ENCODE measurements at regions of chr10 and their contacts with region 1.

Region 1: DNA sequence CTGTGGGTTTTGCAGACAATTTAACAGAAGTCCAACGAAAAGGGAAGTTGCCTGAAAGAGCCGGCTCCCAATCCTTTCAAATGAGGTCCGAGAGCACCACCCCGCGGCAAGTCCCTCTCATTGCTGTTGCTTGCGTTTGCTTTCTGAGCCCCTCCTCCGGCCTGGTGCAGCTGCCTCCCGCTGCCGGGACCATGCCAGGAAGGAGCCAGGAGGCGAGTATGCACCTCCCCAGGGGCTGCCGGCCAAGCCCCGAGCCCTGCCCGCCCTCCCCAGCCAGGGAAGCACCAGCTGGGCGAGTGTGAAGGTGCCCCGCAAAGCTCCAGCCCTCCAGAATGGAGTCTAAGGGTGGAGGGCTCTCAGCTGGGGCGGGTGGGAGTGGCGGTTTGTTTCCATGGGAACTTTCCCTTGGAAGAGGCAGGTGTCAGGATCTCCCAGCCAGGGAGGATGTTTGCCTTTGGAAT is 25.8 kb upstream of the PPP2R2D start:
- DNase-seq: peak; percentile 74 to 89 (median 78)
- H3K4me3 ChIP-seq: no peak overlapping the region
- H3K27ac ChIP-seq: no peak overlapping the region
- H3K4me1 ChIP-seq: no peaks in the 10 kb centered on the region
- H3K27me3 ChIP-seq: no peaks in the 10 kb centered on the region
- CTCF ChIP-seq: peak; percentile 23 to 51 (median 41)
- EP300 ChIP-seq: no peak
- POLR2A ChIP-seq: no peak

Region 2: DNA sequence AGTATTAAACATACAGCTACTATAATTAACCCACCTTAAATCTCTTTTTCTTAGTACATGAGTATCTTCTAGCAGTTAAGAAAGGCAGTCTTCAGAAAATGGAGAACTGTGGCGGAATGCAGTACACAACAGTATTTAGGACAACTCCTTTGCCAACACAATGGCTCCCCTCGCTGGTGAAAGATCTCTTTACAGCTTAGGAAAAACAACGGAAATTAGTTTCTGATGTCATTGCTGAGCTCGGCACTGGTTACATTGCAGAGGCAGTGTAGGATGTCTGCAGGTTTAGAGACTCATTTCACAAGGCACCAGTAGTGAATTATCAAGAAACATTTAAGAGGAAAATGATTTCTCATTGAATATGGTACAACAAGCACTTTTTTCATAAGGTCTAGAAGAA is 1695.4 kb before region 1 on chr10:
- intact Hi-C with region 1: loop called in 2 of 4 experiments (anchors 10 kb)
- DNase-seq: no peak
- H3K4me3 ChIP-seq: no peak overlapping the region
- H3K27ac ChIP-seq: no peak overlapping the region
- H3K4me1 ChIP-seq: no peaks in the 10 kb centered on the region
- H3K27me3 ChIP-seq: no peaks in the 10 kb centered on the region
- CTCF ChIP-seq: no peak
- EP300 ChIP-seq: no peak
- POLR2A ChIP-seq: no peak

Region 3: DNA sequence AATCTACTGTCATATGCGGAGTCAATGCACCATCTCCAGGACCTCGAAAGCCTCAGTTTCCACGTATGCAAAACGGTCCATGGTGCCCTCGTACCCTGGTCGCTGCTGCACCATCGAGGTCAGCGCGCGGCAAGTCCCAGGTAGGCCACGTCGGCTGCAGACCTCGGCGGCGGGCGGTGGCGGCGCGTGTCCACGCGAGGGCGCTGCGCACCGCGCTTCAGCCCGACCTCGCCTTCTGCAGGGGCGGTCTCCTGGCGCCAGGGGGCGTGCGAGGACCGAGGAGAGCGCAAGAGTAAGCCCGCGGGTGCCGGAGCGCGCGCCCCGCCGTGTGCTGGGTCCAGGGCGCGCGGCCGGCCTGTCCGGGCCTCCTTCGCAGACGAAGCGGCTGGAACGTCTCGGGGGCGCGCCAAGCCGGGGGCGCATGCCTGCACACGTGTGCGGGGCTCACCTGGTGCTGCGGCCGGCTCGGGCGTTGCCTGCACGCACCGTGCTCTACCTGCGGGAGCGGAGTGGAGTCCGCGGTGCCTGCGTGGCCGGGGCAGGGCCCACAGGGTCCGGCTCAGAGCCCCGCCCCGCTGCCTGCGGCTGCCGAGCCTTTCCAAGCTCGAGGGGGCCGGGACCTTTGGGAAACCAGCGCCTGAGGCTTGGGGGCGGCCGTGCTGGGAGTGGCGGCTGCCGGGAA is 1684.8 kb before region 1 on chr10:
- intact Hi-C with region 1: loop called (anchors 2 to 10 kb)
- DNase-seq: peak; percentile 86 to 94 (median 94)
- H3K4me3 ChIP-seq: peak overlapping the region; percentile 43
- H3K27ac ChIP-seq: peak overlapping the region in 1 of 2 donors; percentile 45
- H3K4me1 ChIP-seq: peaks cover 6% of the 10 kb centered on the region
- H3K27me3 ChIP-seq: no peaks in the 10 kb centered on the region
- CTCF ChIP-seq: peak; percentile 98 to 100 (median 99)
- EP300 ChIP-seq: no peak
- POLR2A ChIP-seq: no peak

Region 4: DNA sequence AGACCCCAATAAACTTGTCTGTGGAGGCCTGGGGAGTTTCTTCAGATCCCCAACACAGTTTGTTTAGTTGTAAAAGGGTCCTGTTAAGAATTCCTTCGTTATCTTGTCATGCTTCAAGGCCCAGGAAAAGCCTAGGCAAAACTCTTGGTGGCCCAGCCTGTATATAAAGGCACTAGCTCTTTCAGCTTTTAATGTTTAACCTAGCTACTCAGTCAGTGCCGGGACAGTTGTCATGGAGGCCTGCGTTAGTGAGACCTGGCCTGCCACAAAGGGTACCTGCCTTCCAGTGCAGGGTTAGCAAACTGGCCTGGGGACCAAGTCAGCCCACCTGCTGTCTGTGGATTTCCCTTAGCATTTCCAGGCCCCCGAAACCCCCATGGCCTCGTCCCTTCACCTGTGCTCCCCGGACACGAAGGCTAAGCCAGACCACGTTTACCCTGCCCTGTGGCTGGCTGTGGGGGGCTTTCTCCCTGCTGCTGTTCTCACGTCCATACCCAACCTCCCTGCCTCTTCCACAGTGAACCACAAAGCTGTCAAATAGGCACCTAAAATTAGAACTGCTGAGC is 71.1 kb before region 1 on chr10:
- intact Hi-C with region 1: no loop called
- DNase-seq: no peak
- H3K4me3 ChIP-seq: no peak overlapping the region
- H3K27ac ChIP-seq: no peak overlapping the region
- H3K4me1 ChIP-seq: no peaks in the 10 kb centered on the region
- H3K27me3 ChIP-seq: no peaks in the 10 kb centered on the region
- CTCF ChIP-seq: no peak
- EP300 ChIP-seq: no peak
- POLR2A ChIP-seq: no peak

Region 5: DNA sequence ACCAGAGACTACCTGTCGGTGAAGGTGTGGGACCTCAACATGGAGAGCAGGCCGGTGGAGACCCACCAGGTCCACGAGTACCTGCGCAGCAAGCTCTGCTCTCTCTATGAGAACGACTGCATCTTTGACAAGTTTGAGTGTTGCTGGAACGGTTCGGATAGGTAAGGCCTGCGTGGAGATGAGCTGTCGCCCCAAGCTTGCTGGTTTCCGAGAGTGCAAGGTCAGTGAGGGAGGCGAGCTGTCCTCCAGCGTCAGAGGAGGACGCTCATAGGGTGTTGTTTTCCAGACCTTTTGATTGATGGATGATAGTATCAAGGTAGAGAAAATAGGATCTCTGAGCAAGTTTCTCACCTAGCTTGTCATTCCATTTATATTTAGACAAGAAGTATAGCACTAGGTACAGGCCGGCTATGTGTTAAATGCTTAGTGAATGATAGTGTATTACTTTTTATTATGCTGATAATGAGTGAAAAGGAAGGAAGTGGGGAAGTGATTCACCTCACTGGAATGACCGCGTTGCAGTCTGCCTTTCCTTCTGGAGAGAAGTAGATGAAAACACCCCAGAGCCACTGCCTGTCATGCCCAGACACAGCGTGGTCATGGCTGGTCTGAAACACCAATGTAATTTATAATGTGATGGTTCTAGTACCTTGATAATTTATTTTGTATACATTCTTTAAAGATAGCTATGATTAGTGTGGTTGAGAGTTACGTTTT is 72.8 kb after region 1 on chr10:
- intact Hi-C with region 1: no loop called
- DNase-seq: peak in 1 of 5 donors; percentile 18
- H3K4me3 ChIP-seq: no peak overlapping the region
- H3K27ac ChIP-seq: no peak overlapping the region
- H3K4me1 ChIP-seq: peaks cover 9% of the 10 kb centered on the region
- H3K27me3 ChIP-seq: no peaks in the 10 kb centered on the region
- CTCF ChIP-seq: no peak
- EP300 ChIP-seq: no peak
- POLR2A ChIP-seq: no peak